Activated CD4-positive, alpha-beta T cell treated with anti-CD3 and anti-CD28 coated beads, Interleukin-2, amount 10 ng/mL, durations not matched to agents 24 days and 14 days (primary cell): ENCODE measurements at regions of chr11 and their contacts with region 1.

Region 1: DNA sequence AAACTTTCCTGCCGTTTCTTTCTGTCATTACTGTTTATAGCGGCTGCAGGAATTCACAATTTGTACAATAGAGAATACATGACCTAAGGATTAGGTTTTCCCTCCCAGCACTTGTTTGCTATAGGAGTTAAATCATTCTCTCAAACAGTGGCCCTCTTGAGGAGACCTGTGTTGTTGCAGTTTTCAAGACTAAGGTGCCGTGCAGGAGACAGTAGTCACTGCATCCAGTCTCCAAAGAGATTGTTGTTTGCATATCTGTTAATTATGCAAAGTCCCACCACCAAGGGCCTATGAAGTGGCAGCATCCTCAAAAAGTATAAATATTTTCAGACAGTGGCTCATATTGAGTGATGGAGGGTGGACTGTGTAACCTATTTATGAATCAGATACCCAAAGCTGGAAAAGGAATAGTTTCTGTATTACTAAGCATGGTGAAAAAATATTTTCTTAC is 2.3 kb downstream of the PRSS23 start:
- DNase-seq: peak; percentile 74
- H3K4me3 Mint-ChIP-seq: peak overlapping the region; percentile 87
- H3K27ac Mint-ChIP-seq: peak overlapping the region; percentile 65
- H3K4me1 Mint-ChIP-seq: peaks cover 50% of the 10 kb centered on the region
- H3K27me3 Mint-ChIP-seq: peaks cover 27% of the 10 kb centered on the region

Region 2: DNA sequence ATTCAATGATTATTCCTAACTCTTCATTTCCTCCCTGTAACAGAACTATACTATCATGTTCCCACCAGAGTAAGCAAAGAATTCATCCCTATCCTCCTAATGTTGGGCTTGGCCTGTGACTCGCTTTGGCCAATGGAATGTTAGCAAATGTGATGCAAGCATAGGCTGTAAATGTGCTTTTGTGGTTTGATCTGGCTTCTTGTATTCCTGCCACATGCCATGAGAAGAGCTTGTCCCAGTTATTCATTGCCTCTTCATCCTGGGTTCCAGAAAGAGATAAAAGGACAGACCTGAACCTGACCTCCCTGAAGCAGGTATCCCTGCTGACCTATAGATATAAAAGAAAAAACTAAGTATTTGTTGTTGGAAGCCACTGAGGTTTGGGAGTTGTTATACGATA is 1042.7 kb before region 1 on chr11:
- intact Hi-C with region 1: loop called (anchors 10 kb)
- DNase-seq: no peak
- H3K4me3 Mint-ChIP-seq: no peak overlapping the region
- H3K27ac Mint-ChIP-seq: no peak overlapping the region
- H3K4me1 Mint-ChIP-seq: peaks cover 69% of the 10 kb centered on the region
- H3K27me3 Mint-ChIP-seq: no peaks in the 10 kb centered on the region

Region 3: DNA sequence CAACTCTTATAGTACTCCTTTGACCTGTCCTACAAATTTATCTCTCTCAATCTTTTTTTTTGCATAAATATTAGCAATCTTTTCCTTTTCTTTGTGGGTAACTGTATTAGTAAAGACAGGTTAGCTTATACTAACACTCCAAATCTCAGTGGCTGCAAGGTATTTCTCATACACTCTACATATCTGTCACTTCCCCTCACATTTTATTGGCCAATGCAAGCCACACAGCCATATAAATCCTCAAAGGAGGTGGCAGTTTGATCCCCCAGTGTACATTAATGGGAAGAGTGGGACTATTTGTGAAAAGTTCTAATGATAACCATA is 600.7 kb before region 1 on chr11:
- intact Hi-C with region 1: loop called (anchors 5 kb)
- DNase-seq: peak; percentile 70
- H3K4me3 Mint-ChIP-seq: no peak overlapping the region
- H3K27ac Mint-ChIP-seq: no peak overlapping the region
- H3K4me1 Mint-ChIP-seq: peaks cover 14% of the 10 kb centered on the region
- H3K27me3 Mint-ChIP-seq: no peaks in the 10 kb centered on the region

Region 4: DNA sequence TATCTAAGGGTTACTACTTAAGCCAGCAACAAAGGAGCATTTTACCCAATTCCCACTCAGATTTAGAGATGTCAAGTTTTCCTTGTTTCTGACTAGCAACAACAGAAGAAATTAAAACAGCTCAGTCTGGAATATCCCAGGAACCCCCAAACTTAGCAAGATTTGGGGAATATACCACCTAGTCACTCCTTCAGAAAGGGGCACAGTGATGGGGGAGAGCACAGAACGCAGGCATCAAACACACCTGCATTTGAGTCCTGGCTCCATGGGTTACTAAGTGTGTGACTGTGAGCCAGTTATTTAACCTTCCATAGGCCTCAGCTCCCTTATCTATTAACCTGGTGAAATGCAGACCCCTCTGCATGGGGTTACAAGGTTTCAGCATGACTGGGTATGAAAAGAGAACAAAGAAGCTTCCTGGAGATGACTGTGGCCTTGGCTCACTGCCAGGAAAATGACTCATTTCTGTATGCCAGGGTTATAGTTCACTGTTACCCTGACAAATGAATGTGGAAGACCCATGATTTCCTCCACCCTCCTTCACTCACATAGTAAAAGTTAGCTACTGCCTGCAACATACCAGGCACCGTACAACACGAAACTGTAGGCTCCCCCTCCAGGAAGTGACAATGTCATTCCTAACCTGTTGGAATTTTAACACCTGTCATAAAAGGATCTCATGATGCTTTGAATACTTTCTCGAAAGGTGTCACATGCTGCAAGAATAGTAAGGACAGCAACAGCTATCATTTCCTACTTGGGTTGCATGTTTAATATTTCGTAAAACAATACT is 209.8 kb before region 1 on chr11:
- intact Hi-C with region 1: loop called (anchors 1 kb)
- DNase-seq: peak; percentile 94
- H3K4me3 Mint-ChIP-seq: peak overlapping the region; percentile 62
- H3K27ac Mint-ChIP-seq: peak overlapping the region; percentile 90
- H3K4me1 Mint-ChIP-seq: peaks cover 47% of the 10 kb centered on the region
- H3K27me3 Mint-ChIP-seq: no peaks in the 10 kb centered on the region

Region 5: DNA sequence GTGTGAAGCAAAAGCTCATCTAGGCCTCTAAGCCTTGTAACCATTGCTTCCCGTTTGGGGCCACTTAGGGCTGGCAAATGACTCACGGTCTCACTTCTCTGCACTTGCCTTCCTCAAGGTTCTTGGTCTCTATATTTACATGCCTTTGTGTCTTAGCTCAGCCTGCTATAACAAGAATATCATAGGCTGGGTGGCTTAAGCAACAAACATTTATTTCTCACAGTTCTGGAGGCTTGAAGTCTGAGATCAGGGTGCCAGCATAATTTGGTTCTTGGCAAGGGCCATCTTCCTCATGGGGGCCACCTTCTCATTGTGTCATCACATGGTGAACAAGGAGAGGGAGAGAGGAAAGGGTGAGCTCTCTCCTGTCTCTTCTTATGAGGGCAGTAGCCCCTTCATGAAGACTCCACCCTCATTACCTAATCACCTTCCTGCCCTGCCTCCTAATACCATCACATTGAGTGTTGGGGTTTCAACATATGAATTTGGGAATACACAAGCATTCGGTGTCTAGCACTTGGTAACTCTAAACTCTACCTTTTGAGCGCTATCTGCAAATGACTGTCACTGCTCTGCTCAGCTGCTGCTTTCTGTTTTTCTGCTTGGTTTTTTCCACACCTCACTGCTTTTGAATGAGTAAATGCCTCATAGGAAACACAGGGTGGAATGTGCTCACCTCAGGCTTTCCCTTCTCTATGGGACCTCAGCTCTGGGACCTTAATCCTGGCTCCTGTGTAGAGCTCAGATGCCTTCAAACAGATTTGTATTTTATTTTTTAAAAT is 114.0 kb before region 1 on chr11:
- intact Hi-C with region 1: loop called (anchors 1 kb)
- DNase-seq: peak; percentile 63
- H3K4me3 Mint-ChIP-seq: peak overlapping the region; percentile 43
- H3K27ac Mint-ChIP-seq: peak overlapping the region; percentile 87
- H3K4me1 Mint-ChIP-seq: peaks cover 16% of the 10 kb centered on the region
- H3K27me3 Mint-ChIP-seq: no peaks in the 10 kb centered on the region

Region 6: GRCh38 chr11:86849679-86850078 is 47.1 kb after region 1 on chr11:
- intact Hi-C with region 1: no loop called
- DNase-seq: no peak
- H3K4me3 Mint-ChIP-seq: no peak overlapping the region
- H3K27ac Mint-ChIP-seq: no peak overlapping the region
- H3K4me1 Mint-ChIP-seq: no peaks in the 10 kb centered on the region
- H3K27me3 Mint-ChIP-seq: peaks cover 7% of the 10 kb centered on the region